ENCODE measurements at regions of chr3 and their contacts with region 1.

Region 1: GRCh38 chr3:51995346-51996163 is at the start of gene RPL29:
- DNase-seq: peak; percentile 96
- ATAC-seq: peak; percentile 95
- H3K4me3 Mint-ChIP-seq: peak within 1 kb of the TSS; percentile 100
- H3K27ac Mint-ChIP-seq: peak within 1 kb of the TSS; percentile 100
- H3K4me1 Mint-ChIP-seq: peaks cover 26% of the 10 kb centered on the region
- H3K27me3 Mint-ChIP-seq: no peaks in the 10 kb centered on the region
- total RNA-seq, gene RPL29: 1,975 to 2,071 TPM

Region 2: GRCh38 chr3:50350527-50351322 is 1644.8 kb before region 1 on chr3 and contains the starts of genes CYB561D2 and NPRL2:
- CTCF ChIA-PET with region 1: no interaction called
- POLR2A ChIA-PET with region 1: no interaction called
- intact Hi-C with region 1: loop called in 1 of 2 experiments (anchors 5 kb)
- DNase-seq: peak; percentile 99
- ATAC-seq: peak; percentile 90
- H3K4me3 Mint-ChIP-seq: peak within 1 kb of the TSS; percentile 90
- H3K27ac Mint-ChIP-seq: peak within 1 kb of the TSS; percentile 97
- H3K4me1 Mint-ChIP-seq: peaks cover 55% of the 10 kb centered on the region
- H3K27me3 Mint-ChIP-seq: no peaks in the 10 kb centered on the region
- total RNA-seq, gene CYB561D2: 10.3 to 14.3 TPM
- total RNA-seq, gene NPRL2: 42.5 to 43.0 TPM

Region 3: GRCh38 chr3:51384726-51385473 is 610.7 kb before region 1 on chr3 and contains the start of gene MANF:
- CTCF ChIA-PET with region 1: no interaction called
- POLR2A ChIA-PET with region 1: no interaction called
- intact Hi-C with region 1: loop called in 1 of 2 experiments (anchors 5 kb)
- DNase-seq: peak; percentile 99
- ATAC-seq: peak; percentile 97
- H3K4me3 Mint-ChIP-seq: peak within 1 kb of the TSS; percentile 93
- H3K27ac Mint-ChIP-seq: peak within 1 kb of the TSS; percentile 99
- H3K4me1 Mint-ChIP-seq: peaks cover 46% of the 10 kb centered on the region
- H3K27me3 Mint-ChIP-seq: no peaks in the 10 kb centered on the region
- total RNA-seq, gene MANF: 124 to 129 TPM

Region 4: GRCh38 chr3:51974963-51975851 is 20.3 kb before region 1 on chr3 and contains the start of gene ABHD14A:
- CTCF ChIA-PET with region 1: interaction called, 8 read pairs
- POLR2A ChIA-PET with region 1: interaction called, 6 read pairs
- intact Hi-C with region 1: loop called (anchors 1 to 2 kb)
- DNase-seq: peak; percentile 81
- ATAC-seq: peak; percentile 70
- H3K4me3 Mint-ChIP-seq: peak within 1 kb of the TSS; percentile 97
- H3K27ac Mint-ChIP-seq: peak within 1 kb of the TSS; percentile 97
- H3K4me1 Mint-ChIP-seq: peaks cover 34% of the 10 kb centered on the region
- H3K27me3 Mint-ChIP-seq: no peaks in the 10 kb centered on the region
- total RNA-seq, gene ABHD14A: 6.3 to 7.5 TPM

Region 5: DNA sequence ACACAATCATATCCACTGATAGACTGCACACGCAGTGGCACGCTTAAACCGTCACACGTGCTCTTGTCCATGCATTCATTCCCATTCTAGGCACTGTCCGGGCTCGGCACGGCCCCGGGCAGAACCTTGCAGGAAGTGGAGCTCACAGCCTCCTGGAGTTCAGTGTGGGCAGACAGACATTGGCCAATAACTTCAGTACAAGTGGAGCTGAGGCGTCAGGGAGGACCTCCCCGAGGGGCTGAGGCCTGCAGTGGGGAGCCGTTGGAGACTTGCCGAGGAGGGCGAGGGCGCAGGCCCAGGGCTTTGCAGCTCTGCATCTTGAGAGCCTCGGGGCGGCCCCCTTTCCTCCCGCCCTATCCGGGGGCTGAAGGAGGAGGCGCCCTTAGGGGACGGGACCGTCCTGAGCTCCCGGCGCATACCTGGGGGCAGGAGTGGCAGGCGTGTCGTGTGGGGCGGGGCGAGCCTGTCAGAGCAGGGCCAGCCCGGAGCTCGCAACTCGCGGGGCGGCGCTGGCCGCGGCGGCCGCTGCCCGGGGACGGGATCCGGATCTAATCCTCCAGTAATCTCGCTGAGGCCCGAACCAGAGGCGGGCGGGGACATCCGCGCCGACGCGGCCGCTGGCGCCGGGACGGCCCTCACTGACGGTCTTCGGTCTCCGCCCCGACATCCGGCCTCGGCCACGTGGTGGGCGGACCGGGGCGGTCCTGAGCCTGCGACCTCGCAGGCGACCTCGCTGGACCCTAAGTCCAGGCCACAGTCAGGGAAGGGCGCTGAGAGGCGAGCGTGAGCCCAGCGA is 12.6 kb before region 1 on chr3 and contains the start of gene ACY1:
- CTCF ChIA-PET with region 1: interaction called, 25 read pairs
- POLR2A ChIA-PET with region 1: interaction called, 43 read pairs
- intact Hi-C with region 1: loop called (anchors 1 kb)
- DNase-seq: peak; percentile 90
- ATAC-seq: peak; percentile 88
- H3K4me3 Mint-ChIP-seq: peak within 1 kb of the TSS; percentile 96
- H3K27ac Mint-ChIP-seq: peak within 1 kb of the TSS; percentile 96
- H3K4me1 Mint-ChIP-seq: peaks cover 20% of the 10 kb centered on the region
- H3K27me3 Mint-ChIP-seq: no peaks in the 10 kb centered on the region
- total RNA-seq, gene ACY1: 61.5 to 90.0 TPM

Region 6: DNA sequence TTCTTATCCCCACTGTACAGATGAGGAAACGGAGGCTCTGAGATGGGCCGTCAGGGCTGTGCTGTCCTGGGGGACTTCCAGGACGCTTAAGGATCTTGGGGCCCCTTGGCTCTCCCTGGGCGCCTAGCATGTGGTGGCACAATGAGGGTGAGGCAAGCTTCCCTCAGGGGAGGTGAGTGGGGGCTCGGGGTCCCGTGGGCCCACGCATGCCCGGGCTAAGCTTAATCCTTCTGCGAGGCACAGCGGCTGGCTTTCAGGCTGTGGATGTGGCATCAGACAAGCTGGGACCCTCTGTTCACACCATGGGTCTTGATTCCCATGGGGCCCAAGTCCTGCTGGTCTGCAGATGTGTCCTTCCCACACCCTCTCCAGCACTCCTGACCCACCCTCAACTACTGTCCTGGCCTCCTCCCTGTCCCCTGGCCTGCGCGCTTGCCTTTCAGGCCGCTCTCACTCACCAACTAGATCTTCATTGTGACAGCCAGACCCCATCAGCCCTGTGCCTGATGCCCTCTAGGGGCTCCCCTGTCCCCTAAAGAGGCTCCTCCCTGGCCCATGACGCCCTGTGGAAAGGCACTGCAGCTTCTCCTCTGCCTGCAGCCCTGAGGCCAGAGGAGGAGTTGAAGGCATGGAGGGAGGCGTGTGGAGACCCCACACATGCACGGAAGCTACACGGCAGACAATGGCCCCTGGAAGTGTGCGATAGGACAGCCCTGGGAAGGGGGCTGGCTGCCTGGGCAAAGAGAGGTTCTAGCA is 49.5 kb after region 1 on chr3:
- CTCF ChIA-PET with region 1: no interaction called
- POLR2A ChIA-PET with region 1: no interaction called
- intact Hi-C with region 1: no loop called
- DNase-seq: no peak
- ATAC-seq: no peak
- H3K4me3 Mint-ChIP-seq: no peak overlapping the region
- H3K27ac Mint-ChIP-seq: no peak overlapping the region
- H3K4me1 Mint-ChIP-seq: peaks cover 11% of the 10 kb centered on the region
- H3K27me3 Mint-ChIP-seq: no peaks in the 10 kb centered on the region

Region 7: GRCh38 chr3:52253314-52254304 is 258.1 kb after region 1 on chr3:
- CTCF ChIA-PET with region 1: no interaction called
- POLR2A ChIA-PET with region 1: interaction called, 10 read pairs
- intact Hi-C with region 1: no loop called
- DNase-seq: peak; percentile 92
- ATAC-seq: peak; percentile 89
- H3K4me3 Mint-ChIP-seq: peak overlapping the region; percentile 64
- H3K27ac Mint-ChIP-seq: peak overlapping the region; percentile 99
- H3K4me1 Mint-ChIP-seq: peaks cover 82% of the 10 kb centered on the region
- H3K27me3 Mint-ChIP-seq: no peaks in the 10 kb centered on the region

Region 8: DNA sequence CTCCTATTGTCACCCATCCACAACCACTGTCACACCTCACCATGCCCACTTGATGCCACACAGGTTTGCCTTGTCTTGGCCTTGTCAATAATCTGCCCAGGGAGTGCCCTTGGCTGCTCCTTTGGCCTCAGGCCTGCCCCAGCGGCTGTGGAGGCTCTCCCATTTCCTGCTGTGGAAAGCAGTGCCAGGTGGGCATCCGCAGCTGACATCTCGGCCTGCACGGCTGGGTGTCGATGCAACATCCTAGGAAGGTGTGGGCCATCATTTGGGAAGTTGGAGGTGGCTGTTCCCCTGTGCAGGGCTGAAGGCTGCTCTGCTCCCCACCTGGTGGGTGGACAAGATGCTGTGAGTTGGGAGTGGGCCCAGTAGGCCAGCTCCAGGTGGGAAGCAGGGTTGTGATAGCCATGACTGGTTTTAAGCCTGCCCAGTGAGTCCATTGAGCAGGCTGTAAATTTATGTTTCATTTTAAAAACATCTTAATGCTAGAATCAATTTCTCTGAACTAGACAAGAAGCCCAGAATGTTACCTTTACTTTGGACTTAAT is 333.1 kb after region 1 on chr3:
- CTCF ChIA-PET with region 1: no interaction called
- POLR2A ChIA-PET with region 1: no interaction called
- intact Hi-C with region 1: no loop called
- DNase-seq: no peak
- ATAC-seq: no peak
- H3K4me3 Mint-ChIP-seq: no peak overlapping the region
- H3K27ac Mint-ChIP-seq: no peak overlapping the region
- H3K4me1 Mint-ChIP-seq: no peaks in the 10 kb centered on the region
- H3K27me3 Mint-ChIP-seq: no peaks in the 10 kb centered on the region

Measured in activated CD4-positive, alpha-beta T cell treated with anti-CD3 and anti-CD28 coated beads for 36 hours (primary cell).